GM23248 (cell line): ENCODE measurements at regions of chr3 and their contacts with region 1.

Region 1: DNA sequence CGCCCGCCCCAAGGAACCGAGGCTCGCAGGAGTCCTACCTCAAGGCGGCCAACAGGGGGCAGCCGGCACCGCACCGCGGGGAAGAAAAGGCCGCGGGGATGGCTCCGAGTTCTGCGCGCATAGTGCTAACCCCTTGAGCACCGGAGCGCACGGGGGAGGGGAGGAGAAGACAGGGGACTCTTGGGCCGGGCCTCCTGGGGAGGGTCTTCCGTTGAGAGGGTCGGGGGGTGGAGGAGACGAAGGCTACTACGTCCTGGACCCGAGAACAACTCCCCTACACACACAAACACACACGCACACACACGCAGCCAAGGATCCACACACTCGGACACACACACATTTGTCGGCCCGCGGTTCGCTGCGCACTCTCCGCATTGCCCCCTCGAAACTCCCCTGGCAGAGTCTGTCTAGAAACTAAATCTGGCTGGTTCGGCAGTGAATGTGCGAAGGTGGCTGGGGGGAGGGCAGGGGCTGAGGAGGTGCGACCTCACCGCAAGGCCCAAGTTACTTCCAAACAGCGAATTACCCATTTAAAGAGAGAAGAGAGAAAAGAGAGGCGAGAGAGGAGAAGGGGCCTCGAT is 1.8 kb downstream of the WNT5A start:
- DNase-seq: peak; percentile 82
- H3K4me3 ChIP-seq: peak overlapping the region; percentile 97
- H3K27ac ChIP-seq: peak overlapping the region; percentile 86
- H3K4me1 ChIP-seq: peaks cover 7% of the 10 kb centered on the region; the same call in 1 of the 2 replicates
- H3K27me3 ChIP-seq: no peaks in the 10 kb centered on the region

Region 2: DNA sequence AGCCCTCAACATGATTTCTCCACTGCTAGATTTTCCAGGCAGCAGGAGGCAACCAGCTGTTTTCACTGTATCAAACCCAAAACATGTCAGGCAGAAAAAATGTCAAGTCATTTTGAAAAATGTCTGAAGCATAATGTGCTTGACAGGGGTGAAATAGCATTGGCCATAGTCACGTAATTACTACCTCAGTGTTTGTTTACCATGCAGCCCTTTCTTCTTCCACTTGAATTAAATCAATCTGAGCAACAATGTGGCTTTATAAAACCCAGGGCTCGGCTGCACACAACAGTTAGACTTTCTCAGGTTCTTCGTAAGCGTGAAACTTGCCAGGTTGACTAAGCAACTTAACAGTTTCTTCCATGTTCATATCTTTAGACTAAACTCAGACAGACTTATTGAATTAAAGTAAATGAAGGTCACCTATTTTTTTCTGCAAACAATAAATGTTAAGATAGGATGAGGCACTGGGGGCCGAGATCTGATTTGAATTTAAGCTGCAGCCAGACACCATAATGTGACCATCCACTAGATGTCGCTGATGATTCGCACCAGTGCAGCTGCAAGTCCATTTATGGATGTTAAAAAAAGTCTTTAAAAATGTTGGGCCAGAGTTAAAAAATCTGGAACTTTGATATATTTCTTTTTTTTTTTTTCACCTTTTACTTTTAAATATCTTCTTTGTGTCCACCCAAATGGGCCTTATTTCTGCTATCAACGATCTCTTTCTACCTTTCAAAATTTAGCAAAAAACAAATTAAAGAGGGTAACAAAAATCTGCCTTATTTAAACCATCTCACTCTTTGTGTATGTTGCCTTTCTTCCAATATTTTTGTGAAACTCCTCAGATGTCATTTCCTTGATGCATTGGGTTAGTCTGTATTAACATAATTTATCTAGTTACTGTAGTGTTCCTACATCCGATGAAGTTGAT is 1057.1 kb before region 1 on chr3:
- in situ Hi-C with region 1: loop called (anchors 25 kb)
- DNase-seq: peak; percentile 75
- H3K4me3 ChIP-seq: peak overlapping the region; percentile 47
- H3K27ac ChIP-seq: no peak overlapping the region
- H3K4me1 ChIP-seq: 0 out of 2 replicates have a peak, but pooled peaks cover 5% of the 10 kb centered on the region
- H3K27me3 ChIP-seq: no peaks in the 10 kb centered on the region

Region 3: GRCh38 chr3:54506603-54507002 is 978.7 kb before region 1 on chr3:
- in situ Hi-C with region 1: no loop called
- DNase-seq: peak; percentile 12
- H3K4me3 ChIP-seq: no peak overlapping the region
- H3K27ac ChIP-seq: no peak overlapping the region
- H3K4me1 ChIP-seq: no peaks in the 10 kb centered on the region
- H3K27me3 ChIP-seq: no peaks in the 10 kb centered on the region

Region 4: GRCh38 chr3:54863131-54863765 is 622.1 kb before region 1 on chr3:
- in situ Hi-C with region 1: loop called (anchors 10 kb)
- DNase-seq: peak; percentile 55
- H3K4me3 ChIP-seq: peak overlapping the region; percentile 7; the same call in 1 of the 2 replicates
- H3K27ac ChIP-seq: peak overlapping the region; percentile 60
- H3K4me1 ChIP-seq: peaks cover 57% of the 10 kb centered on the region
- H3K27me3 ChIP-seq: no peaks in the 10 kb centered on the region

Region 5: GRCh38 chr3:56086355-56086754 is 601.1 kb after region 1 on chr3:
- in situ Hi-C with region 1: no loop called
- DNase-seq: peak; percentile 36
- H3K4me3 ChIP-seq: no peak overlapping the region
- H3K27ac ChIP-seq: no peak overlapping the region
- H3K4me1 ChIP-seq: no peaks in the 10 kb centered on the region; the same call in 1 of the 2 replicates
- H3K27me3 ChIP-seq: no peaks in the 10 kb centered on the region; the same call in 1 of the 2 replicates

Region 6: DNA sequence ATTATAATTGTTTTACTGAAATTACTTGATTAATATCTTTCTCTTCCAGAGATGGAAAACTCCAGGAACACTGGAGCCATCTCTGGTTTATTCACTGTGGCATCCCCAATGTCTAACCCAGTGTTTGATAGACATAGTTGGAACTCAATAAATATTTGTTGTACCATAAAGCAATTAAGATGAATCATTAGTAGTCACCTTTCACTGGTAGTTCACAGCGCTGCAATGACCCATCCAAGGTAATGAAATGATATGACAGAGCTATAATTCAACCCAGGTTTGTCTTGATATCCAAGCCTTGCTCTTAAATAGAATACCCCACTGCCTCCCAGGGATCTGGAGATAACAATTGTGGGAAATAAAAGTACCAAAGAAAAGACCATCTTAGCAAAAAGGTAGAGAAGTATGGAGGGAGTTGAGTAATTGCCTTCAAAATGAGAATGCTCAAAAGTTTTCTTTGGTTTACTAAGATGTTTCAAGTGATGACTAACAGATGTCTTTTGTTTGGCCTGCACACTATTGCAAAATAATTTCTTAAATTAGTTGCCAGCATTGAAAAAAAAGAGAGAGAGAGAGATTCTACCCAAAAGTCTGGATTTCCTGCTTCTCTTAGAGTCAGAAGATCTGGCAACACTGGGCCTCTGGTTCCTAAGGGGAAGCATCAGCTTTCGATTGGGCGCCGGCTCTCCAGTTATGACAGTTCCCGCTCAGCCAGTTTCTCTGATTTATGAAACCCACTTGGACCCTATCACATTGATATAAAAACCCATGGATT is 634.5 kb after region 1 on chr3:
- in situ Hi-C with region 1: no loop called
- DNase-seq: peak; percentile 86
- H3K4me3 ChIP-seq: no peak overlapping the region
- H3K27ac ChIP-seq: peak overlapping the region; percentile 50
- H3K4me1 ChIP-seq: peaks cover 14% of the 10 kb centered on the region
- H3K27me3 ChIP-seq: no peaks in the 10 kb centered on the region